Left ventricle myocardium superior (tissue), 1 donor: ENCODE measurements at regions of chr12 and their contacts with region 1.

Region 1: GRCh38 chr12:13211859-13212664 is 15.5 kb downstream of the EMP1 start:
- DNase-seq: peak; percentile 39
- ATAC-seq: peak; percentile 27

Region 2: DNA sequence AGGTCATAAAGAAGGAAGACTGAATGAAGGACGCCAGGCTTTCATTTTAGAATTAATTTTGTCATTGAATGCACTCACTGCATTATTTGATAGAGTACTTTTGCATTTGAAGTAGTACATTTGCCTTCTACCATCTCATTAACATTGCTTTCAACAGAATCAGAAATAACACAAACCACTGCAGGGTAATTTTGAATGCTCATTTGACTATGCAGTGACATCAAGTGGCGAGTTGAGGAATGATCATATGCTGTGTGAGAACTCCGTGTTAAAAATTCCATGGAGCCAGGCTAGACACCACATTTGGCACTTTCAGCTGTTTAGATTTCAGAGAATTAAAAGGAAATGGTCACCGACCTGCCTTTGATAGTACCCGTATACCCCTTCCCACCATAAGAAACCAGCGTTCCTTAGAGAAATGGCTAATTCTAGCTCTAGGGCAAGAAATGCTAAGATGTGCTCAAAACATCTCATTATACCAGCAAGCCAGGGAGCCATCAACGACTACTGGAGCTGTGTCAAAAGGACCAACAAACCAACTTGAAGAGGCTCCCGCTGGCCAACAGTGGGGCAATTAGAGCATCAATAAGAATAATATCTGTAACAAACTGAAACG is 228.5 kb before region 1 on chr12:
- intact Hi-C with region 1: loop called (anchors 5 kb)
- DNase-seq: no peak
- ATAC-seq: peak; percentile 79

Region 3: GRCh38 chr12:13100882-13101769 is 110.9 kb before region 1 on chr12:
- intact Hi-C with region 1: loop called (anchors 5 kb)
- DNase-seq: peak; percentile 95
- ATAC-seq: peak; percentile 86

Region 4: DNA sequence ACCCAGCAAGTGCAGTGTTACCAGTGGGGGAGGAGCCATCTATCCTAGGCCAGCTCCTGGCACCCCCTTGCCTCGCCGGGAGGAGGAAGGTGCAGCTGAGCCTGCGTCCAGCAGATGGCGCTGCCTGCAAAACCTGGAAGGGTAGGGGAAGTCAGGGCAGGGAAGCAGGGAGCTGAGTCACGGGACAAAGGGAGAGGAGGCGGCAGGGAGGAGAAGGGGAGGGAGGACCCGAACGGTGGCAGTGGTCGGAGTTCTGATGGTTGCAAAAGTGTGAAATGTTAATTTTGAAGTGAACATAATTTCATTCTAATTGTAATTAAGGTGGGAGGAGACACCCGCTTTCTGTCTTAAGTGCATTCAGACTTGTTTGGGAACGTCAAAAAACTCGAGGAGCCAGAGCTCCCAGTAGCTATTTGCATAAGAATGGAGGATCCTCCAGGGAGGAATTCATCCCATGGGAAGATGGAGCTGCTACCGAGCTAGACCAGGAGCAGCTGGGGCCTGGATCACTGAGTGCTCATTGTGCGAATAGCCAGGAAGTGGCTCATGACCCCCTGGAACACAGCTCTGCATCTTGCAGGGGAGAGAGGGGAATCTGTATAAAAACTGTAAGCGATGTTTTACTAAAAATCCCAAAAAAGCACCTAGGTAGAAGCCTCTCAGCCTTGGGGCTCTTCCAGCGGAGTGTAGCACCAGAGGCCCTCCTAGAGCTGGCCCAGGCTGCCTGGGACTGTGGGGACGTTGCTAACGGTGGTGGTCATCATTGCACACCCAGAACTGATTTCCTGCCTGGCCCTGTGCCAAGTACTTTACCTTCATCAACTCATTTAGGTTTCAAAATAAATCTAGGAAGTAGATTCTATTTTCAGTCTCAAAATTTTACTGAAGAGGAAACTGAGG is 44.0 kb after region 1 on chr12:
- intact Hi-C with region 1: no loop called
- DNase-seq: peak; percentile 94
- ATAC-seq: peak; percentile 100